CD8-positive, alpha-beta memory T cell (primary cell): ENCODE measurements at regions of chr6 and their contacts with region 1.

Region 1: GRCh38 chr6:138428944-138429598 is 25.0 kb downstream of the HEBP2 start:
- DNase-seq: peak in 2 of 5 donors; percentile 24 to 50
- H3K4me3 ChIP-seq: no peak overlapping the region
- H3K4me3 Mint-ChIP-seq: no peak overlapping the region
- H3K27ac ChIP-seq: no peak overlapping the region
- H3K27ac Mint-ChIP-seq: no peak overlapping the region
- H3K4me1 ChIP-seq: no peaks in the 10 kb centered on the region
- H3K4me1 Mint-ChIP-seq: peaks cover 0 to 4% (median 0%) of the 10 kb centered on the region in 3 donors
- H3K27me3 ChIP-seq: no peaks in the 10 kb centered on the region
- H3K27me3 Mint-ChIP-seq: peaks cover 7 to 27% of the 10 kb centered on the region in 2 donors

Region 2: GRCh38 chr6:138397128-138398122 is 31.6 kb before region 1 on chr6:
- CTCF ChIA-PET with region 1: no interaction called
- POLR2A ChIA-PET with region 1: no interaction called
- DNase-seq: no peak
- H3K4me3 ChIP-seq: no peak overlapping the region
- H3K4me3 Mint-ChIP-seq: no peak overlapping the region
- H3K27ac ChIP-seq: no peak overlapping the region
- H3K27ac Mint-ChIP-seq: no peak overlapping the region
- H3K4me1 ChIP-seq: no peaks in the 10 kb centered on the region
- H3K4me1 Mint-ChIP-seq: no peaks in the 10 kb centered on the region
- H3K27me3 ChIP-seq: no peaks in the 10 kb centered on the region
- H3K27me3 Mint-ChIP-seq: peaks cover 3 to 8% of the 10 kb centered on the region in 2 donors

Region 3: DNA sequence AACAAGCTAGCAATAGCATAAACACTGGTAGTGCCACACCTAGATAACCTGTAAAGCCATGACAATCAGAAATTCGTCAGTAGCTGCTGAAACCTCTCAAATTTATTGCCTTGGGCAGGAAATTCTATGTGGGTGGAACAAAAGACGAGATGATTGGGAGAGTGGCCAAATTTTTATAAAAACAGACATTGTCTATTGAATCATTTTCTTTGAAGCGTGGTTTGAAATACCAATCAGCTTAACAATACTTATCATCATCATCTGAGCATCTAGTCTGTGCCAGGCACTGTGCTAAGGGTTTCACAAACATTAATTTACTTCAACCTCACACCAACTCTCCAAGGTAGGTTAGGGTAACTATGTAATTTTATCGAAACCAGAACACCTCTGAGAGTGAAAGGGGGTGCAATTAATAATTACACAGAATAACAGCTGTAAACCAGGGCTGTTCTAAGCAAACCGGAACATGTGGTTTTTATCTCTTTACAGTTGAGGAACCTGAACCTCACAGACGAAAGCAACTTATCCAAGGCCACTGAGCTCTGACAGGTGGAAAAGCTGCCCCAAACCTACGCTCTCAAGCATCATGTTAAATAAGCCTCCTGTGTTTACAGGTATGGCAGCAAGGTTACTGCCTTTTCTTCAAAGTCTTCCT is 26.8 kb after region 1 on chr6:
- CTCF ChIA-PET with region 1: interaction called, 10 read pairs
- POLR2A ChIA-PET with region 1: no interaction called
- DNase-seq: peak in 3 of 5 donors; percentile 42 to 70 (median 55)
- H3K4me3 ChIP-seq: peak overlapping the region; percentile 30
- H3K4me3 Mint-ChIP-seq: peak overlapping the region; percentile 39 to 86 (median 63)
- H3K27ac ChIP-seq: no peak overlapping the region
- H3K27ac Mint-ChIP-seq: peak overlapping the region; percentile 46 to 91 (median 82)
- H3K4me1 ChIP-seq: peaks cover 21% of the 10 kb centered on the region
- H3K4me1 Mint-ChIP-seq: peaks cover 20 to 30% (median 23%) of the 10 kb centered on the region in 3 donors
- H3K27me3 ChIP-seq: no peaks in the 10 kb centered on the region
- H3K27me3 Mint-ChIP-seq: no peaks in the 10 kb centered on the region

Region 4: GRCh38 chr6:138509371-138509770 is 80.3 kb after region 1 on chr6:
- CTCF ChIA-PET with region 1: interaction called, 87 read pairs
- POLR2A ChIA-PET with region 1: no interaction called
- DNase-seq: peak in 3 of 5 donors; percentile 9 to 54 (median 36)
- H3K4me3 ChIP-seq: no peak overlapping the region
- H3K4me3 Mint-ChIP-seq: no peak overlapping the region
- H3K27ac ChIP-seq: no peak overlapping the region
- H3K27ac Mint-ChIP-seq: no peak overlapping the region
- H3K4me1 ChIP-seq: no peaks in the 10 kb centered on the region
- H3K4me1 Mint-ChIP-seq: peaks cover 2 to 6% (median 3%) of the 10 kb centered on the region in 3 donors
- H3K27me3 ChIP-seq: no peaks in the 10 kb centered on the region
- H3K27me3 Mint-ChIP-seq: peaks cover 1 to 8% of the 10 kb centered on the region in 2 donors

Region 5: GRCh38 chr6:138517635-138518034 is 88.6 kb after region 1 on chr6:
- CTCF ChIA-PET with region 1: interaction called, 87 read pairs
- POLR2A ChIA-PET with region 1: no interaction called
- DNase-seq: peak; percentile 27 to 69 (median 44)
- H3K4me3 ChIP-seq: no peak overlapping the region
- H3K4me3 Mint-ChIP-seq: no peak overlapping the region
- H3K27ac ChIP-seq: no peak overlapping the region
- H3K27ac Mint-ChIP-seq: peak overlapping the region in 1 of 8 donors; percentile 19
- H3K4me1 ChIP-seq: no peaks in the 10 kb centered on the region
- H3K4me1 Mint-ChIP-seq: peaks cover 13 to 16% (median 16%) of the 10 kb centered on the region in 3 donors
- H3K27me3 ChIP-seq: no peaks in the 10 kb centered on the region
- H3K27me3 Mint-ChIP-seq: peaks cover 4 to 25% of the 10 kb centered on the region in 2 donors